ENCODE measurements at regions of chr5 and their contacts with region 1.

Region 1: GRCh38 chr5:129664337-129664937 is 83.5 kb upstream of the MINAR2 start:
- DNase-seq: peak; percentile 76

Region 2: GRCh38 chr5:128992331-128992730 is 672.1 kb before region 1 on chr5:
- in situ Hi-C with region 1: no loop called
- DNase-seq: no peak

Region 3: GRCh38 chr5:129716235-129716634 is 51.8 kb after region 1 on chr5:
- in situ Hi-C with region 1: no loop called
- DNase-seq: no peak

Region 4: DNA sequence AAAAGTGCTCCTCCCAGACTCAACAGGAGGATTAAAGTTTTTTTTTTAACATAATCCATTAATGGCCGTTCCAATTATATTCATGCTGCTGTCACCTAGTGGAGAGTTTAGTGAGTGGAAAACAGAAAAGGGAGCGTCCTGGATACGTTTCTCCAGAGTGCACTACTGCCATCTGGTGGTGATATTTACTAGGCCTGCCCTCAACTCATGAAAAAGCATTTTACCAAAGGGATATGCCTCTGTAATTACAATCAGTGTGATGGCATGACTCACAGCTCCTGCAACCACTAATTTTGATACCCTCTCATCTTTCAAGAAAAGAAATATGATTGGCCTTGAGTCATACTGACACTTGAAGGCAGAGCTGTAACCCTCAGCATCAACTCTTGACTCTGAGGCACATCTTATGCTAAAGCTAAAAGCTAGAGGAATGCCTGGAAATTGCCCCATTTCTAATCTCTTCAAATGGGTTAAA is 103.5 kb after region 1 on chr5:
- in situ Hi-C with region 1: loop called (anchors 25 kb)
- DNase-seq: peak; percentile 92